ENCODE measurements at regions of chr17 and their contacts with region 1.

Region 1: DNA sequence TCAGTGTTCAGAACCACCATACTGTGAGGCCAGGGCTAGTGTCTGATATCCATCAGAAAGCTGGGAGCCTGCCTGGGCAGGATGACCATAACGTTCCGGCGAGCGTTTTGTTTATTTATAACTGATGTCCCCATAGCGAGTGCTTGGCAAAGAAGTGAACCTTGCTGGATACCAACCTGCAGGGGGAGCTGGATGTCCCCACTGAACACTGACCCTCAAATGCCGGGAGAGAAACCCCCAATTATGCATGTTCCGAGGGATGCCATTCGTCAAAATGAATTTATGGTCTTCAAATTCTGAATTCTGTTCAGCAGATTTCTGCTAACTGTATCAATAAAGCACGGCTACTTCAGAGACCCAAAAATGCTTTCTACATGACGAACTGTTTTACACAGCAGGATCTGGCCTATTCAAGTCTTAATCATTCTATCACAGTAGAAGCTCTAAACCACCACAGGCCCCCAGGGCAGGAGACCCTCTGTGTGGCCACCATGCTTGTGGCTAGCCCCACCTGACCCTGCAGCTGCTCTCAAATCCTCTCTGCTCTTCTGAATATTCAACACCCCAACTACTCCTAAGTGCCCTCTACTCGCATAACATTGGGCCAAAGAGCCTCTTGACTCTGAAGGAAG is 15.2 kb downstream of the MED24 start:
- DNase-seq: peak; percentile 92
- H3K4me3 Mint-ChIP-seq: no peak overlapping the region
- H3K27ac Mint-ChIP-seq: no peak overlapping the region
- H3K4me1 Mint-ChIP-seq: peaks cover 8% of the 10 kb centered on the region
- H3K27me3 Mint-ChIP-seq: no peaks in the 10 kb centered on the region
- CTCF ChIP-seq: no peak

Region 2: GRCh38 chr17:38605888-38606645 is 1432.9 kb before region 1 on chr17 and contains the start of gene SRCIN1:
- CTCF ChIA-PET with region 1: no interaction called
- intact Hi-C with region 1: no loop called
- DNase-seq: peak; percentile 91
- H3K4me3 Mint-ChIP-seq: peak within 1 kb of the TSS; percentile 74
- H3K27ac Mint-ChIP-seq: peak within 1 kb of the TSS; percentile 48
- H3K4me1 Mint-ChIP-seq: peaks cover 31% of the 10 kb centered on the region
- H3K27me3 Mint-ChIP-seq: peaks cover 99% of the 10 kb centered on the region
- CTCF ChIP-seq: peak; percentile 100
- total RNA-seq, gene SRCIN1: 46.6 and 46.7 TPM in 2 replicates

Region 3: GRCh38 chr17:39988206-39988810 is 50.7 kb before region 1 on chr17:
- CTCF ChIA-PET with region 1: no interaction called
- intact Hi-C with region 1: loop called (anchors 5 kb)
- DNase-seq: no peak
- H3K4me3 Mint-ChIP-seq: no peak overlapping the region
- H3K27ac Mint-ChIP-seq: no peak overlapping the region
- H3K4me1 Mint-ChIP-seq: no peaks in the 10 kb centered on the region
- H3K27me3 Mint-ChIP-seq: no peaks in the 10 kb centered on the region
- CTCF ChIP-seq: no peak

Region 4: DNA sequence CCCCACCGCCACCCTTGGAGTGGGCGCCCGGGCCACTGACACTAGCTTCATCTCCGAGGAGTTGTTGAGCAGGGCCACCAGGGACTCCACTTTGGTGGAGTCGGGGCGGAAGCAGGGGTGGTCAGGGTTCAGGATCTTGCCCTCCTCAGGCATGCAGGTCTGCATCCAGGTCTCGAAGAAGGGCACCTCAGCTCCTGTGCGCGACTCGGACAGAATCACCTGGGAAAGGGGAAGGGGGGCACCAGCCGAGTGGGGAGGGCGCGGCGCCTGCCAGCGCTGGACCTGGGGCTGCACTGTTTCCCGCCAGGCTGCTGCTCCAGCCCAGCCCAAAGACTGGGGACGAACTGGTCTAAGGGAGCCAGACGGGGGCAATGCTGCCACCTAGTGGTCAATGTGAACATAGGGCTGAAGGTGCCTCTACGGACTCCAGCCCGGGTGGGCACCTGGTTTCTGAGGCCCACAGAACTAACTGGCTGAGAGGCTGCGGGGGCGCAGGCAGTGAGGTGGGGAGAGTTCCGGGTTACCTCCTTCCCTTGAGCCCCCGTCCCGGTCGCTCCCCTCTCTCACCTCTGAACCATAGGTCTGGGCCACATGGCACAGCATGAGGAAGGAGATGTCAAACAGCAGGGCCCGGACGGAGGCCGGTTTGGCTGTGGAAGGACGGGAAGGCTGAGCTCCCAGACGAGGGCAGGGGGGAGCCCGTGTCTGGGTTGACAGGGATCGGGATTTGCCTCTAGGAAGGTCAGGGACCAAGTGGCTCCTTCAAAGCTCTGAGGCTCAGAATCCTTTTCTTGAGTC is 12.0 kb before region 1 on chr17:
- CTCF ChIA-PET with region 1: interaction called, 56 read pairs
- intact Hi-C with region 1: no loop called
- DNase-seq: peak; percentile 100
- H3K4me3 Mint-ChIP-seq: no peak overlapping the region
- H3K27ac Mint-ChIP-seq: no peak overlapping the region
- H3K4me1 Mint-ChIP-seq: peaks cover 30% of the 10 kb centered on the region
- H3K27me3 Mint-ChIP-seq: no peaks in the 10 kb centered on the region
- CTCF ChIP-seq: no peak

Region 5: DNA sequence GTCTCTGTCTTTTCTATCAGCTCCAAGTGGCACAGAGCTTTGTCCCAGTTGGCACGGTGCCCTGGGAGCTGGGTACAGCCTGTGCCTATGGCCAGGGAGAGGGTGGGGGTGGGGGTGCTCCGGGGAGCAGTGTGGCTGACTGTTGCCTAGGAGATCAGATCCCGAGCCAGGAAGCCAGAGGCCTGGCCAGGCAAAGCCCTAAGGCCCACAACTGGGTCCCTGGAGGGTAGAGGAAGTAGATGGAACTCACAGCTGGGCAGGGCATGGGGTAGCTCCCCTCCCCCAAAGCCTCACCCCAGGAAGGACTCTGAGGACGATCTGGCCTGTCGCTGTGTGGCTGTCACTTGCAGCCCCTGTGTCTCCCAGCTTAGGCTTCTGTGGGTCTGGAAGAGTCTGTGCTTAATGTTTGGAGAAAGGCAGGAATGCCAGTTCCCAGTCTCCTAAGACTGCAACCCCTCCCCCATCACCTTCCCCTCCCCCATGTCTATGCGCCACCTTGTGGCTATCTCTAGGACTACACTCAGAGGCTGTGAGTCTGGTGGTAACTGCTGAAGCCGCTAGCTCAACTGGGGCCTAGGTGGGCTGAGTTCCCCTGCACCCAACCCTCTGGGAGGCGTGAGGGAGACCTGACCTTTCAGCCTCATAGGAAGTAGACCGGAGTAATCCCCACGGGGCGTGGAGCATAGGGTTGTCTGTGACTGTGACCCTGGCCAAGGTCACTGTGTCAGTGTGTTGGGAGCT is 36.4 kb after region 1 on chr17:
- CTCF ChIA-PET with region 1: interaction called, 66 read pairs
- intact Hi-C with region 1: loop called (anchors 1 kb)
- DNase-seq: peak; percentile 98
- H3K4me3 Mint-ChIP-seq: peak overlapping the region; percentile 14
- H3K27ac Mint-ChIP-seq: peak overlapping the region; percentile 6
- H3K4me1 Mint-ChIP-seq: peaks cover 70% of the 10 kb centered on the region
- H3K27me3 Mint-ChIP-seq: no peaks in the 10 kb centered on the region
- CTCF ChIP-seq: no peak

Region 6: DNA sequence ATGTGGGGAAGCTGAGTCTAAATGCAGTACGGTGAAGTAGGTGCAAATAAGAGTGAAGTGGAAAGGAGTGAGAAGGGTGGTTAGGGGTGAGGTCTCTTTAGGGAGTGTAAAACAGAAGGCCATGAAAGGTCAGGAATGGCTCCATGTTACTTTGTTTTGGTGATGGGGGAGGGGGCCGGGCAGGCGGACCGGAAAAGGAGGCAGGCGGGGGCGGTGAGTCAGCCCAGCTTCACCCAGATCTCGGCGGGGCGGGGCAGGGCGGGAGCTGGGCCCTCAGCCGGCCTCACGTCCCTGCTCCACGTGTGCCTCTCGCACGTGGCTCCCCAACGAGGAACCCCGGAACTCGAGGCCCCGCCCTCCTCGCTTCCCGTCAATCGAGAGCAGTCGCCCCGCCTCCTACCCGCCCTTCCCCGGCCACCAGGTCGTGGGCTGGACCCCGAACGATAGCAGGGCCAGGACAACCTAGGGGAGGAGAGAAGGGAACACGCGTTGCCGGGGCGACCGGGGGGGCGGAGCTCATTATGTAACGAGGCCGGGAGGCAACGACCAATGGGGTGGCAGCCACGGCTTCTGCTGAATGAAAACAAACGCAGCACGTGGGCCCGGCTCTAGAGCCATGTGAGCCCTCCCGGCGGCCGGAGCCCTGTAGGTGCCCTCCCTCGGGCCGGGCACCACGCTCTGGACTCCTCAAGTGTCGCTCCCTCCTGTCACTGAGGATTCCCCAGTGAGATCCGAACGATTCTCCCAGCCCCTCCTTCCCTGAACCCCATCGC is 60.0 kb after region 1 on chr17:
- CTCF ChIA-PET with region 1: interaction called, 31 read pairs
- intact Hi-C with region 1: no loop called
- DNase-seq: peak; percentile 100
- H3K4me3 Mint-ChIP-seq: peak overlapping the region; percentile 80
- H3K27ac Mint-ChIP-seq: peak overlapping the region; percentile 85
- H3K4me1 Mint-ChIP-seq: peaks cover 73% of the 10 kb centered on the region
- H3K27me3 Mint-ChIP-seq: no peaks in the 10 kb centered on the region
- CTCF ChIP-seq: no peak

Region 7: DNA sequence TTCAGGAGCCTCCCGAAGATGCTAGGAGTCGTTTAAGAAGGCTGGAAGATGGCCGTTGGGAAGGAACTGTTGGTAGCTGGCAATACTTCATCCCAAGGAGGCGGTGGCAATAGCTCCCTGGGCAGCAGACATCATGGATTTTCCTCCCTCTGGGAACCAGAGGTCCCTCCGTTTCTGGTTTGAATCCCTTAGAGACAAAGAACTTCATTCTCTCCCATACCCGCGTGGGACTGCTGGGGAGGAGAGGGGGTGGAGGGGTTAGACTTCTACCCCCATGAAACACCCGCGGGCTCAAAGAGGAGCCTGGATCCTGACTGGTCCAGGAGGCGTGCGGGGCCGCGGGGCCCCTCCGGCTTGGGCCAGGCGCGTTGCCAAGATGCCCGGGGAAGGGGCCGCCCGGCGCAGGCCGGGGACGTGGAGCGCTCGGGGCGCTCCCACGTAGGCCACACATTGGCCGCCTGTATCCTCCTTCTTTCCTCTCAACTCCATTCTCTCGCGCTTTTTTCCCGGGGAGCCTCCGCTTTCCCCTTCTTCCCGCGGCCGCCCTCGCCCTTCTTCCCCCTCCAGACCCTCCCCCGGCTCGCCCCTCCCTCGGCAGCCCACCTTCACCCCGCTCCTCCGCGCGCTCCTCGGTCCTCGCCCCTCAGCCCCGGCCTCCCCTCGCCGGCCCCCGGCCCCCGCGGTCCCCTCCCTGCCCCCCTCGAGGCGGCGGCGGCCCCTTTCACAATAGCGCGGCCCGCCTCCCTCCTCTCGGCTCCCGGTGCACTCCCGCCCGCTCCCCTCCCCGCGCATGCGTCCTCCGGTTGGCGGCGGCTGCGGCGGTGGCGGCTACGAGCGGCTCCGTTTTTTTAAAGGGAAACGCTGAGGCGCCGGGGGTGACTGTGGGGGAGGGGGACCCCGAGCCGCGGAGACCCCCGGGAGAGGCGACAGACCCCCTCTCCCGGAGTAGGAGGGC is 82.5 kb after region 1 on chr17 and contains the start of gene MSL1:
- CTCF ChIA-PET with region 1: interaction called, 10 read pairs
- intact Hi-C with region 1: no loop called
- DNase-seq: peak; percentile 100
- H3K4me3 Mint-ChIP-seq: peak within 1 kb of the TSS; percentile 86
- H3K27ac Mint-ChIP-seq: peak within 1 kb of the TSS; percentile 53
- H3K4me1 Mint-ChIP-seq: peaks cover 48% of the 10 kb centered on the region
- H3K27me3 Mint-ChIP-seq: no peaks in the 10 kb centered on the region
- CTCF ChIP-seq: no peak
- total RNA-seq, gene MSL1: 505 and 524 TPM in 2 replicates

Region 8: DNA sequence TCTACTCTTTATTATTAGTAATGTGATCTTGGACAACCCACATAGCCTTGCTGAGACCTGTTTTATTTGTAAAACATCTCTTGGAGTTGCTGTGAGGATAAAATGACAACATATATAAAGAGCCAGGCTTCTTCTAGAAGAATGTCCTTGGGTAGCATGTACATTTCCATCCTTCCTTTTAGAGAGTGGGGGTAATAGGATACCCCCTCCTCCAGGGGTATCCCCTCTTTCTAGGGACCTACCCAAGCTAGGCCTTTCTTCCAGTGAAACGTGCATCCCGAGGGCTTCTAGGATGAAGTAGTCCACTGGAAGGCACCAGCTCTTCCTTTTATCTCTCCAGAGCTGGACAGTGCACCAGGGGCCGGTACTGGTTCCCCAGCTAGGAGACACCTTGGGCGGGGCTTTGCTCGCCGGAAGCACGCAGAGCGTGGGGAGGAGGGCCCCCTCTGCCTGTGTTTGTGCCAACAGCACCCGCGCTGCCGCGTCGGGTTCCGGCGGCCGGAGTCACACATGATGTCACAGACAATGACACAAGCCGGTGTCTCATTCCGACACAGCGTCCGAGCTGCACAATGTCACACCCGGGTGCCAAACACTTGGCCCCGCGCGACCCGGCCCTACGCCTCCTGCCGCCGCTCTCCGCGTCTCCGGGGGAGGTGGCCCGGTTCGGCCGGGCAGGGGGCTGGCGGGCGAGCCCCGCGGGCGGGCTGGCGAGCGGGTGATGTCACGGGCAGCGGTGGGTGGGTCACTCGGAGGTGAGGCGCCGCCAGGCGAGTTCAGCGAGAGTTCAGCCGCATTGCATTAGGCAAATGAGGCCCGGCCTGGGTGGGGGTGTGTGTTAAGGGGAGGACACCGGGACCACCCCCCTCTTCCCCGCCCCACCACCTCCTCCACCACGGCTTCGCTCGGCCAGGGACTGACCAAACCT is 302.1 kb after region 1 on chr17:
- CTCF ChIA-PET with region 1: no interaction called
- intact Hi-C with region 1: no loop called
- DNase-seq: peak; percentile 100
- H3K4me3 Mint-ChIP-seq: peak overlapping the region; percentile 89
- H3K27ac Mint-ChIP-seq: peak overlapping the region; percentile 75
- H3K4me1 Mint-ChIP-seq: peaks cover 57% of the 10 kb centered on the region
- H3K27me3 Mint-ChIP-seq: no peaks in the 10 kb centered on the region
- CTCF ChIP-seq: peak; percentile 92

Region 9: DNA sequence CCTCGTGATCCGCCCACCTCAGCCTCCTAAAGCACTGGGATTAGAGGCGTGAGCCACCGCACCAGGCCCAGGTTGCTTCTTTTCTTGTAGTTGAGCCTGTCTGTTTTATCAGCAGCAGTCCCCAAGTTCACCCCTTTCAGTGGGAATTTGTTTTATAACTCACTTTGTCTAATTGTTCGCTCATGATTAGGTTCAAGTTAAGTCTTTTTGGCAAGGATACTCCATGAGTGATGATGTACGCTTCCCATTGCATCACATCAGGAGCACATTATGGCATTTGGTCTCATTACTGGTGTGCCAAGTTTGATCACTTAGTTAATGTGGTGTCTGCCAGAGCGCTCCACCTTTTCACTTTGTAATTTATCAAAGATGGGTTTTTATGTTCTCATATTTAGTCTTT is 340.0 kb after region 1 on chr17:
- CTCF ChIA-PET with region 1: no interaction called
- intact Hi-C with region 1: no loop called
- DNase-seq: no peak
- H3K4me3 Mint-ChIP-seq: no peak overlapping the region
- H3K27ac Mint-ChIP-seq: no peak overlapping the region
- H3K4me1 Mint-ChIP-seq: no peaks in the 10 kb centered on the region
- H3K27me3 Mint-ChIP-seq: no peaks in the 10 kb centered on the region
- CTCF ChIP-seq: no peak